ENCODE measurements at regions of chr2 and their contacts with region 1.

Region 1: GRCh38 chr2:26745609-26746327 is 18.3 kb upstream of the SLC35F6 start:
- DNase-seq: peak; percentile 84 to 88
- ATAC-seq: peak; percentile 89 to 94
- H3K4me3 ChIP-seq: no peak overlapping the region
- H3K27ac ChIP-seq: peak overlapping the region; percentile 53 to 94; a peak in 5 of 6 replicates
- H3K4me1 ChIP-seq: peaks cover 41% of the 10 kb centered on the region
- CTCF ChIP-seq: peak; percentile 99
- EP300 ChIP-seq: no peak
- POLR2A ChIP-seq: no peak
- RAD21 ChIP-seq: peak; percentile 100

Region 2: DNA sequence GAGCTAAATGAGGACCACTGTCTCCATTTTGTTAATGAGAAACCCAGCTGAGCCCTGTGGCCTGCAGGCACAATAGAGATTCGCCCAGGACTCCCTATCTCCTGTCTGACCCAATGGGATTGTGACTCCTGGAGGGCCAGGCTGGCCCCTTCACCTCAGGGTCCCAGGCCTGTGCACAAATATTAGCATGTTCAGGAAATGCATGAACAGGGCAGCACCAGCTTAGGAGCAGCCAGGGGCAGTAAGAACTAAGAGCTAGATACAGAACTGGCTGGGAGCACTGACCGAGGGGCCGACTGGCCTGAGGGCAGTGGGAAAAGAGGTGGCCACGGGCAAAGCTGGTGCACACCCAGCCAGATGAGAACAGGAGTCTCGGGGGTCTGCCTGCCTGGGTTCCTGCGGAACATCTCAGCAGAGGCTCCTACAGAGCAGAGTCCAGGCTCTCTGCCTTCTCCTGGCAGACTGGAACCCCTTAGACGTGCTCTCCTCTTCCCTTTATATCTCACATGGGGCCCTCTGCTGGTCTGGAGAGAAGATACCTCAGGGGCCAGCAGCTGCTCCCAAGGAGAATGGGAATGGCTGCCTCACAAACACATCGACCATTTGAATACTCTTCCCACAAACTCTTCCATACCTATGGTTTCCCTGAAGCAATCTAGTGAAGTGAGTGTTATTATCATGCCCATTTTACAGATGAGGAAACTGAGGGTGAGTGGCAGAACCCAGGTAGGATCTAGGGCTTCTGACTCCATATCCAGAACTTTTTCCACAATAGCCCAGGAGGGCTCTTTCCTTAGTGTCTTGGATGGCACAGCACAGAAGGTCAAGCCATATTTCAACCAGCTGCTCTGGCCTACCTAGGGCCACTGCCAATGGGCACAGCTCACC is 190.3 kb before region 1 on chr2:
- CTCF ChIA-PET with region 1: interaction called, 10 read pairs
- POLR2A ChIA-PET with region 1: no interaction called
- DNase-seq: peak; percentile 37 to 47
- ATAC-seq: peak in 1 of 2 experiments; percentile 79; a peak in 3 of 6 replicates
- H3K4me3 ChIP-seq: no peak overlapping the region
- H3K27ac ChIP-seq: no peak overlapping the region
- H3K4me1 ChIP-seq: no peaks in the 10 kb centered on the region
- CTCF ChIP-seq: peak; percentile 20; the same call in 2 of the 3 replicates
- EP300 ChIP-seq: no peak
- POLR2A ChIP-seq: no peak
- RAD21 ChIP-seq: peak in 1 of 2 experiments; percentile 10; a peak in 1 of 5 replicates

Region 3: GRCh38 chr2:26598336-26598995 is 147.3 kb before region 1 on chr2:
- CTCF ChIA-PET with region 1: interaction called, 736 read pairs
- POLR2A ChIA-PET with region 1: no interaction called
- DNase-seq: no peak
- ATAC-seq: peak in 1 of 2 experiments; percentile 53; a peak in 3 of 6 replicates
- H3K4me3 ChIP-seq: no peak overlapping the region
- H3K27ac ChIP-seq: peak overlapping the region in 1 of 2 experiments; percentile 18; a peak in 1 of 6 replicates
- H3K4me1 ChIP-seq: 0 out of 3 replicates have a peak, but pooled peaks cover 8% of the 10 kb centered on the region
- CTCF ChIP-seq: no peak
- EP300 ChIP-seq: no peak
- POLR2A ChIP-seq: no peak
- RAD21 ChIP-seq: no peak

Region 4: GRCh38 chr2:26640331-26640745 is 105.4 kb before region 1 on chr2:
- CTCF ChIA-PET with region 1: interaction called, 20 read pairs
- POLR2A ChIA-PET with region 1: no interaction called
- DNase-seq: no peak
- ATAC-seq: peak in 1 of 2 experiments; percentile 60; a peak in 3 of 6 replicates
- H3K4me3 ChIP-seq: no peak overlapping the region
- H3K27ac ChIP-seq: peak overlapping the region in 1 of 2 experiments; percentile 54; a peak in 3 of 6 replicates
- H3K4me1 ChIP-seq: peaks cover 6% of the 10 kb centered on the region; the same call in 2 of the 3 replicates
- CTCF ChIP-seq: no peak
- EP300 ChIP-seq: no peak
- POLR2A ChIP-seq: no peak
- RAD21 ChIP-seq: no peak

Region 5: GRCh38 chr2:26685989-26686839 is 59.6 kb before region 1 on chr2:
- CTCF ChIA-PET with region 1: interaction called, 31 read pairs
- POLR2A ChIA-PET with region 1: no interaction called
- DNase-seq: no peak
- ATAC-seq: peak in 1 of 2 experiments; percentile 27; a peak in 3 of 6 replicates
- H3K4me3 ChIP-seq: no peak overlapping the region
- H3K27ac ChIP-seq: no peak overlapping the region
- H3K4me1 ChIP-seq: peaks cover 6% of the 10 kb centered on the region; the same call in 1 of the 3 replicates
- CTCF ChIP-seq: no peak
- EP300 ChIP-seq: no peak
- POLR2A ChIP-seq: no peak
- RAD21 ChIP-seq: no peak

Region 6: DNA sequence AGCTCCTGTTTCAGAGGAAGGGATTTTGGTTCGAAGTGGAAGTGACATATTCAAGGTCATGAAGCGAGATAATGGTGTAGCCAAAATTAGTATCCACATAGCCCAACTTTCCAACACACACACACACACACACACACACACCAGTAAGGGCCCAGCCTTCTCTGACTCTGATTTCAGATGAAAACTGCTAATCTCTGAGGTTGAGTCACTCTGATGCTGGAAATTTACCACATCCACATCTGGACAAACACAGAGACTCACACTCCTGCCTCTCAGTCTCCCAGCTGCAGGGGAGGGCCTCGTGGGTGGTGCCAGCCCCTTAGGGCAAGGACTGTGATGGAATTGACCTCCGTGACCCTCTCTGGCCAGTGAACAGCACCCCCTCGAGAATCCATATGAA is 10.7 kb before region 1 on chr2:
- CTCF ChIA-PET with region 1: interaction called, 107 read pairs
- POLR2A ChIA-PET with region 1: no interaction called
- DNase-seq: peak in 1 of 2 experiments; percentile 86
- ATAC-seq: peak; percentile 51 to 61; a peak in 4 of 6 replicates
- H3K4me3 ChIP-seq: no peak overlapping the region
- H3K27ac ChIP-seq: peak overlapping the region; percentile 68 to 94; a peak in 5 of 6 replicates
- H3K4me1 ChIP-seq: peaks cover 52% of the 10 kb centered on the region
- CTCF ChIP-seq: 0 out of 3 replicates have a peak, but pooled peaks have one; percentile 11
- EP300 ChIP-seq: no peak; a peak in 2 of 5 replicates
- POLR2A ChIP-seq: no peak
- RAD21 ChIP-seq: no peak; a peak in 2 of 5 replicates